ENCODE measurements at regions of chr2 and their contacts with region 1.

Region 1: DNA sequence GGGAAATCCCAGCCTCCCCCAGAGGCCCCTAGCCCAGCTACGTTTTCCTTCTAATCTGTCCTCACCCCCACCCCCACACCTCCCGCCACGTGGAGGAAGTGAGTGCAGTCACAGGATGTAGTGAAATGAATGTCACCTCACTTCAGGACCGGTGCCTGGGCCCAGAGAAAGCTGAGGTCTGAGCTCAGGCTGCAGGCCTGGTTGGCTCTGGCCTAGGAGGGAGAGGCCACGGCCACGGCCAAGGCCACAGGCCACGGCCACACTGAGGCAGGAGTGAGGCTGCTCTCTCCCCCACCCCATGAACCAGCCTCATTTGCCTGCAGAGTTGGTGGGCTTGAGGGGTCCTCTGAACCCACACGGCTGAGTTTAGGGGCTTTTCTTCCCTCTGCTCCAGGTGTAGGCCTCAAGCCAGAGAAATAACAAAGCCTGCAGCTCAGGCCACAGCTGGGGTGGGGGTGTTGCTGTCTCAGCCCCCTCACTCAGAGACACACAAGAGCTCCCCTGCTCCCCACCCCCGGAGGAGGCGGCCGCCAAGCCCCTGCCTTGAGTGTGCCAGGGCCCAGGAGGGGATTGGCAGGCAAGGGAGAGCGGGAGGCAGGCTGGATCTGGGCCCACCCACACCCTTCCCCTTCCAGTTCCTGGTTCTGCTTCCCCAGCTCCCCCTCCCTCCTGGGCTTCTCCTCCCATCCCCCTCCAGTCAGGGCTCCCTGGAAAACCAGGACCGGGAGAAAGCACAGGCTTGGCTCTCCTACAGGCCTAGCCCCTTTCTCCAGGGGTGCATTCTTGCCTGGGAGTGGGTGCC is 27.0 kb downstream of the DNMT3A start:
- DNase-seq: peak; percentile 89
- CTCF ChIP-seq: no peak

Region 2: DNA sequence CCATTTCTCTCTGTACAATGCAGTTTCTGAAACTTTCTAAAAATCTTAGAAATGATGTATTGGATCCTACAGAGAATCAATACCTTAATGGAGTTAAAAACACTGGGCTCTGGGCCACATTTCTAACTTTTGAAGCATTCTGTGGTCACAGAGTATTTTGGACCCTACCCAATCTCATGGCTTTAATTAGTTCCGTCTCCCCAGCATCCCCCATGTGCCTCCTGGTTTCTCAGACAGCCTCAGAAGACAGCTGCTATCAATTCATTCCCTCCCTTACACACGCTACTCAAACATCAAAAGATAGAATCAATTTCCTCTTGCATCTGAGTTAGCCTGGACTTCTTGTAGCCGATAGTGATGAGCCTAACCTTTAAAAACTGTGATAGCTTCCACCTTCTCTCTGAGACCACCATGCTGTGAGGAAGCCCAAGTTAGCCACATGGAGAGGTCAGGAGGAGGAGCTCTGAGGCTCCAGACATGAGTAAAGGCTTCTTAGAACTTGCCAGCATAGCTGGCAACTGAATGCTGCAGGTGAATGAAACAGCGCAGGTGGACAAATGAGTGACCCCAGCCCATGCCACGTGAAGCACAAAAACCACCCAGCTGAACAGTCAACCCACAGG is 405.0 kb before region 1 on chr2:
- CTCF ChIA-PET with region 1: no interaction called
- POLR2A ChIA-PET with region 1: no interaction called
- DNase-seq: no peak
- CTCF ChIP-seq: no peak

Region 3: DNA sequence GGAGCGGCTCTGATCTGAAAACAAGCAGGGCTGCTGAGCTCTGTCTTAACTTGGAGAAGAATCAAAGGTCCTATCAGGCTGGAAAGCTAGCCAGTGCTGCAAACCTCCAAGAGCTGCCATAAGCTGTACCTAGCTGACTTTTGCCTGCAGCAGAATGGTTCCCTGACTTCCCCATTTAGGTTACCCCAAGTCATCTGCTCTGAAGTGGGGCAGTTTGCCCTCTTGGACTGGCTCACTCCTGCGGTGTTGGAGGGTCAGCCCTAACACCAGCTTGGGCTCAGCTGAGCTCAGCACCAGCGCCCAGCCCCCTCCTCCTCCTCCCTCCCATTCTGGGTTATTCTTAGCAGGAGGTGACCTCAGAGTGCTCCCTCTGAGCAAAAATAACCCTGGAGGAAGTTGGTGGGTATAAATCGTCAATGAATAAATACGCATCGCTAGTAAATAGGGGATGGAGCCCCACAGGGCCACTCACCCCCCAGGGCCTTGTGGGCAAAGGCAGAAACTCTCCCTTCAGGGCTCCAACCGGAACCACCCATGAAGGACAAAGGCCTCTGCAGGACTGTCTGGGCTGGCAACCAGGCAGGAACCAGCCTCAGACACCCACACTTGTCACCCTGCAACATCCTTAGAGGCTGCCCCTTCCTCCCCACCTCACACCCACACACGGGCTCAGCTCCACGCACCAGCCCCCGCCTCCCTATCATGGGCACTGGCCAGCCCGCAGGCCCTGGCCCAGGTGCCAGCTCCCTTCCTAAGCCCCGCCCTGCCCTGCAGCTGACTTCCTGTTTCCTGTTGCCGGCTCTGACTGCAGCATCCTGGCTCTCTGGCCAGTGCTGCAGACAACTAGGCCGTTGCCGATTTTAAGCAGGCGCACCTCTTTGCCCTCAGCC is 19.9 kb before region 1 on chr2:
- CTCF ChIA-PET with region 1: no interaction called
- POLR2A ChIA-PET with region 1: no interaction called
- DNase-seq: peak; percentile 87
- CTCF ChIP-seq: no peak

Region 4: DNA sequence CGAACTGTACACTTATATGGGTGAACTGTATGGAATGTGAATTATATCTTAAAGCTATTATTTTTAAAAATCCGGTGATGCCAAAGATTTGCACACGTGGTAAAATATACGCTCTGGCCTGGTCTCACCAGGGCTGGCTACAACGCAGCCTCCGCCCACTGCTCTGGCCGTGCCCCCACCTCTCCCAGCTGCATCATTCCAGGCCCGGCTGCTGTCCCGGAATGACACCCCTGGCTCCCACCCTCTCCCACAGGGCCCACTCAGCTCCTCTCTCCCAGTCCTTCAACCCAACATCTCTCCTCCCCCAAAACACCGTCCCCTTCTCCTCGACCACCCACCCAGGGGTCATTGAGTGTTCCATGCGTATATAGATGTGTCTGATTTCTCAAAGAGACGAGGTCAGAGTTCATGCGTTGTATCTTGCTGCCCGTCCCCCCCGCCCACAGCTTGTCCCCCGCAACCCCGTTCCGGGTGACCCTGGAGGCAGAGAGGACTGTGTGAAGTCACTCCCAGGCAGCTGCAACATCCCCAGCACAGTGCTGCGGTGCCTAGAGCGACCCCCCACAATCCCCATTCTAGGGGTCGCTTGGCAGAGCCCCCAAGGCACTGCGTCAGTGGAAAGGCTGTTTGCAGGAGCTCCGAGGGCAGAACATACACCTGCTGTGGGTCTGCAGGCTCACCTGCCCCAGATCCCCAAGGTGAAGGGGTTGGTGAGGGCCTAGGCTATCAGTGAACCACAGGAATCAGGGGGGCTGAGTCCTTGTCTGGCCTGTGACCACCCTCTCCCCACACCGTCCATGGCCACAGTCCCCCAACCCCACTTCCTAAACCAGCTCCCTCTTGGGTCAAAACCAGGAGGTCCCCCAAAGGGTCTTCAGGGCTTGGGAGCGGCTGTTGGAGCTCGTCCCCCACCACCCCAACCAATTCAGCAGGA is 13.7 kb after region 1 on chr2:
- CTCF ChIA-PET with region 1: interaction called, 11 read pairs
- POLR2A ChIA-PET with region 1: interaction called, 3 read pairs
- DNase-seq: no peak
- CTCF ChIP-seq: no peak

Region 5: DNA sequence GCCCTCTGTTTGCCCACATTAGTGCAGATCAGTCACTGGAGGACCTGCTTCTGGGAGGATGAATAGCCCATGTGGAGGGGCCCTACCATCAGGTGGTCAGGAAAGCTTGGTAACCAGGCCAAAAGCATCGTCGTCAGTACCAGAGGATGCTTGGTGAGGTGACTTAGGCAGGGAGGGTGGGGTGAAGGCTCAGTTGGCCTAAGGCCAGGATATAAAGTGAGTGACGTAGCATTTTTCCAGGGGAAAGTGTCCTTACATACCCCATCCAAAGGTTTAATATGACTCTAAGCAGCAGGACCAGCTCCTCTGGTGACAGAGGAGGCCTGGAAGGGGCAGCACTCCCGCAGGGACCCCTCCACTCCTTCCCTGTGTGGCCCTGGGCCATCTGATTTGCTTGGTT is 54.7 kb after region 1 on chr2:
- CTCF ChIA-PET with region 1: no interaction called
- POLR2A ChIA-PET with region 1: no interaction called
- DNase-seq: no peak
- CTCF ChIP-seq: no peak

Measured in GM10248 (cell line).